ENCODE measurements at regions of chr10 and their contacts with region 1.

Region 1: DNA sequence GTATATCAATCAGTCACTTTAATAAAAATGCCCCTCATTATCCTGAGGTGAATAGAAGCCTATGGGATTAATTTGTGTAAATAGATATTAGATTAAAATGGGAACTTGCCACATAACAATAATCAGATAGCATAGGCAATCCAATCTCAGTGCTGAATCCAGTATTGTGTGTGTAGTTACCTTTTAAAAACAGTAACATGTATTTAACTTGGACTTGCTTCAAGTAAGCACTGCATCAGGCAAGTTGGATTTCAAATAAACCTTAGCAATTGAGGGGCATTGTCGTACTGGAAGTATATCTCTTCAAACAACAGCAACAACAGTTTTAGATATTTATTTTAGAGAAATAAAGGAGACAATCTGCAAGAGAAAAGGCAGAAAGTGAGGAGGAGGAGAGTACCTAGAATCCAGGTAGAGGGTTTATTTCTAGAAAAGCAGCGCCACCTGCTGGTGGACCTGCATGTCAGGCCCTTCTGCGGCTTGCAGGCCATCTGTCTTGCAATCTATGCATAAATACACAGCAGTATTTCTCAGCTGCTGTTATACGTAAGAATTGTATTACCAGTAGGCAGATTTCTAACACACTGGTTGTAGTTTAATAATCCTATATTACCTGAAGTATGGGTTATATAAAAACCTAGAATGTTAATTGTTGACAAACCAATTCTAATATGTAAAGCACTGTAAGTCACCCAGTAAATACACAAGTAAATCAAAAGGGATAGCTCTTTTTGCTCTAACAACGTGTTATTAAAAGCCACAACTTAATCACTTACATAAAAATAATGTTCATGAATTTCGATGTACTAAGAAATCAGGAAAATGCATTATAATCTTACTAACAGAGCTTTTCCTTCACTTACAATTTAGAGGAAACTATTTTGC is 652.8 kb downstream of the KCNMA1 start:
- DNase-seq: peak; percentile 52 to 78
- ATAC-seq: peak; percentile 87 to 94
- H3K4me3 ChIP-seq: no peak overlapping the region
- H3K27ac ChIP-seq: no peak overlapping the region
- H3K4me1 ChIP-seq: no peaks in the 10 kb centered on the region
- CTCF ChIP-seq: peak; percentile 96
- EP300 ChIP-seq: no peak
- POLR2A ChIP-seq: no peak
- RAD21 ChIP-seq: peak; percentile 88

Region 2: DNA sequence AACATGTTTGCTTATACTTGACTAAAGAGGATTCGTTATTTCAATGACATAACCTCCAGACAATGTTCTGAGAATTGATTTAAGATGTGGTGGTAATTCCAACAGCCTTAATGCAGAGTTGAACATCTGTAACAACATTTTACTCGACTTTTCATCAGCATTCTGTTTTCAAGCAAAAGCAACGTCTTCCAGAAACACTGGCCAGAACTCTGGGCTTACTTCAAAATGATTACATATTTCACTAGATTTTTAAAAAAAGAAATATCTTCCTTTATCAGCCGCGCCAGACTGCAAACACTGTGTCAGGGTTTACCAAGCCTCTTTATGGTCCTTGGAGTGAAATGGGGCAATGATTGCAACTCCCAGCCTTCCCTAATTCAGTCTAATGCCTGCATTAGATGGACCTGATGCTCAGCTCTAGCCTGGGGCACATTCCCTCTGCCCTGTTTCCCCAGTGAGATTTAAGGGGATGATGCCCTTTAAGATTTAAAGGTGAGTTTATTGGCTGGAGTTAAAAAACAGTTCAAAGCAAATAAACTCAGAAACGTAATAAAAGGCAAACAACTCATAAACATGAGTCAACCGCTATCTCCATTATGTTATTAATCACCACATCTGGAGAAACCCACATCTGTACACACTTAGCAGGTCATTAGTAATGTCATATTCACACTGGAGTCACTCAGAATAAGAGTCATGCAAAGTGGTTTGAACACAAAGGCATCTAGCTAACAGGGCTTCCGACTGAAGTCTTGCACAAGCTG is 11.1 kb before region 1 on chr10:
- CTCF ChIA-PET with region 1: interaction called, 17 read pairs
- POLR2A ChIA-PET with region 1: no interaction called
- DNase-seq: no peak
- ATAC-seq: no peak
- H3K4me3 ChIP-seq: no peak overlapping the region
- H3K27ac ChIP-seq: no peak overlapping the region
- H3K4me1 ChIP-seq: no peaks in the 10 kb centered on the region
- CTCF ChIP-seq: no peak
- EP300 ChIP-seq: no peak
- POLR2A ChIP-seq: no peak
- RAD21 ChIP-seq: no peak

Region 3: GRCh38 chr10:76998451-76998850 is 13.7 kb after region 1 on chr10:
- CTCF ChIA-PET with region 1: interaction called, 21 read pairs
- POLR2A ChIA-PET with region 1: no interaction called
- DNase-seq: no peak
- ATAC-seq: no peak
- H3K4me3 ChIP-seq: no peak overlapping the region
- H3K27ac ChIP-seq: no peak overlapping the region
- H3K4me1 ChIP-seq: no peaks in the 10 kb centered on the region
- CTCF ChIP-seq: no peak
- EP300 ChIP-seq: no peak
- POLR2A ChIP-seq: no peak
- RAD21 ChIP-seq: no peak

Measured in A549 (cell line).